ENCODE measurements at regions of chr3 and their contacts with region 1.

Region 1: GRCh38 chr3:128497387-128498126 is 4.6 kb upstream of the GATA2 start:
- DNase-seq: peak; percentile 79
- ATAC-seq: peak; percentile 84

Region 2: DNA sequence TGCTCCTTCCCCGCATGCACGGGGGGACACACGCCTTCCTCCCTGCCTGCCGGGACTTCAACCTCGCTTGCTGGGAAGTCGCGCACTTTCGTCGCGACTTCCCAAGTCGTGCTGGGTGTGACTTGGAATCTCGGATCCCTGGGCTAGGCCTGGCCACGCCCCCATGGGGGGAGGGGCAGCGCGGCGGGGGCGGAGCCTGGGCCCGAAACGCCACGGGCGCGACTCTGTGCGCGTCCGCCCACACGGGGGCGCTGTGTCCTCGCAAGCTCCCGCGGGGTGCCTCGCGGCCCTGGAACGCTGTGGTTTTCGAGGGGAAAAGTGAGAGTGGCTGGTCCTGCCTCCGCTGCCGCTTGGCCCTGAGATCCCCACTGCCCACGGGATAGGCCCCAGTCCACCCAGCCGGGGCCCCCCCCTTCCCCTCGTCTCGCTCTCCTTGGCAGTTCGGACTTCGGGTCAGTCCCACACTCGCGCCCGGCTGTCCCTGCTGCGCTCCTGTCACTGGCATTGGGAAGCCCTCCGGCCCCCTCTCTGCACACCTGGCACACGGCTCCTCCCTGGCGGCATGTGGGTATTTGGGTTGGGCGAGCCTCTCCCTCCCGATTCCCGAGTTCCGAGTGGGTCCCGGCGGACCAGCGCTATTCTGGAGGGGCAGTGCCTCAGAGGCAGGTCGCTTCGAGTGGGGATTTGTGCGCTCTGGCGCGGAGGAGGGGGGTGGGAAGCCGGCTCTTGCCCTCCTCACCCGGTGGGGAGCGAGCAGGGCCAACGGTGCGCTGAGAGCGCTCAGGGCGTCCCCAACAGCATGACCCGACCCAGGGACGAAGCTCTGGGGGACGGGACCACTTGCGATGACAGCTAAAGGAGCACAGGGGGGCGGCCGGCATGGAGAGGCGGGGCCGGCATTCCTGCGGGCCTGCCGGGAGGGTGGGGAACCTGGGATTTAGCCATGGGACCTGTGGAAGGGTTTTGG is 421.8 kb before region 1 on chr3:
- intact Hi-C with region 1: loop called (anchors 10 kb)
- DNase-seq: peak; percentile 94
- ATAC-seq: peak; percentile 94

Region 3: GRCh38 chr3:128170805-128171516 is 326.6 kb before region 1 on chr3:
- intact Hi-C with region 1: loop called (anchors 5 kb)
- DNase-seq: peak; percentile 59
- ATAC-seq: peak; percentile 76

Region 4: GRCh38 chr3:128226795-128227395 is 270.7 kb before region 1 on chr3:
- intact Hi-C with region 1: no loop called
- DNase-seq: no peak
- ATAC-seq: peak; percentile 73

Region 5: GRCh38 chr3:128307029-128307633 is 190.4 kb before region 1 on chr3:
- intact Hi-C with region 1: loop called (anchors 10 kb)
- DNase-seq: no peak
- ATAC-seq: no peak

Region 6: GRCh38 chr3:128426128-128426921 is 71.2 kb before region 1 on chr3:
- intact Hi-C with region 1: loop called (anchors 5 kb)
- DNase-seq: peak; percentile 65
- ATAC-seq: peak; percentile 95

Measured in Right ventricle myocardium superior (tissue), 1 donor.